Heart right ventricle (tissue), 16 donors: ENCODE measurements at regions of chr22 and their contacts with region 1.

Region 1: DNA sequence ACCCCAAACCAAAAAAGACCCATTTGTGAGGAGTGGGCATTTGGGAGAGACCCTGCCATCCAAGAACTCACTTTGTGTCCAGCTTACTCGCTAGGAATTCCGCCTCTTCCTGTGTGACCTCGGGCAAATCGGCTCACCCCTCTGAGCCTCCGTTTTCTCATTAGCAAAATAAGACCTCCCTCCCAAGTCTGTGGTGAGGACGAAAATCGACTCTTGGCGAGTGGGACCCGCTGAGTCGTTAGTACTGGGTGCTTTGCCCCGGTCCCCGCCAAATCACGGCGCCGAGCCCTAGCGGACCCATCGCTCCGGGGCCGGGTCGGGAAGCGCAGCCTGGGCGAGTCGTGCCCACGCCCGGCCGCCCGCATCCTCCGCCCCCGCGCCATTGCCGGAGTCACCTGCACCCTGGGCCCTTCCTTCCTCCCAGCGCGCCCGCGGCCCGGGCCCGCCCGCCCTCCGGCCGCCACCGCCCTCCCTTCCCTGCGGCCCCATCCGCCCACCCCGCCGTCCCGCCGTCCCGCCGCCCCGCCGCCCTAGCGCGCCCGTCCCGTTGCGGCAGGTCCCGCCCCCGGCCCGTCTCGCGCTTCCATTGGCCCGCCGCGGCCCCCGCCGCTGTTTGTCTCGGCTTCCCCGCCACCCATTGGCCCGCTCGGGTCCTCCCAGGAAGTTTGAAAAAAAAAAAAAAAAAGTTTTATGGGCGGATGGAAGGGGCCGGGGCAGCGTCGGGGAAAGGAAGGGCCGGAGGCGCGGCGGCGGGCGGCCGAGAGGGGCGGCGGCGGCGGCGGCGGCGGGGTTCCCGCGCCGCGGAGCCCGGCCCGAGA is 48.9 kb downstream of the TRIOBP start:
- DNase-seq: peak; percentile 93
- ATAC-seq: peak; percentile 46 to 86 (median 73)
- H3K4me3 ChIP-seq: peak overlapping the region; percentile 70 to 99 (median 96)
- H3K27ac ChIP-seq: peak overlapping the region; percentile 98 to 100 (median 99)
- H3K4me1 ChIP-seq: peaks cover 39 to 80% (median 71%) of the 10 kb centered on the region in 9 donors
- H3K27me3 ChIP-seq: no peaks in the 10 kb centered on the region
- CTCF ChIP-seq: no peak

Region 2: DNA sequence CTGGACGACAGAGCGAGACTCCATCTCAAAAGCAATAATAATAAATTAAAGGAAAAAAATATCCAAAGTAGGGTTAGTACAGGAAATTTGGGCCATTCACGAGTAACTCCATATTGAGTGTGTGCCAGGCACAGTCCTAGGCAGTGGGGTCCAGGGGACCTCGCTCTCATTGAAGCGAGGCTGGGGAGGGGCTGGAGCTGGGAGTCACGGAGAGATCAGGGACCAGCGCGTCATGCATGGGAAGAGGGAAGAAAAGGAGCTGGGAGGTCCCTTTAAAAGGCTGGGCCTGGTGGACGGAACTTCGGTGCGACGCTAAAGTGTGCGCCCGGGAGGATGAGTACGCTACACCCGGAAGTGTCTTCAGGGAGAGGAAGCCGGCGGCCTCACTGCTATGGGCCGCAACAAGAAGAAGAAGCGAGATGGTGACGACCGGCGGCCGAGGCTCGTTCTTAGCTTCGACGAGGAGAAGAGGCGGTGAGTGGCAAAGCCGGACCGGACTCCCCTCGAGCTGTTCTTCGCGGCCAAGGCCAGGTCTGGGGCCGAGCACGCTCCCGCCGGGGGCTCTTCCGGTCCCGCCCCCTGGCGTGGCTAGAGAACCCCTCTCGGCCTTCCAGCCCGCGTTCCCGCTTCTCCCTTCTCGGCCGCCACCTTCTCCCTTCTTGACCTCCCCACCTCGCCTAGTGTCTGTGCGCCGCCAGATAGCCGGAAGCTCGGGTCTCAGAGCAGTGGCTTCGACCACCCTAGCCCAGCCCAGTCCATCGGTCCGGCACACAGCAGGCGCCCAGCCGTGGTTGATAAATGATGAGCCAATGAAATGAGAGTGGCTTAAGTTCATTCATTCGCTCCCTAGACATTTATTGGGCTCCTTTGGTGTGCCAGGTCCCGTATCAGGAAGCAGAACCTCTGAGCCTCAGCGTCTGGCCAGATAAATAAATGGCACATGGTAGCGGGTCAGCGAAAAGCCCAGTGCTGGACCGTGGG is 59.5 kb before region 1 on chr22 and contains the start of gene NOL12:
- intact Hi-C with region 1: loop called in 1 of 10 experiments (anchors 5 kb)
- DNase-seq: peak; percentile 78 to 80
- ATAC-seq: peak; percentile 90 to 96 (median 92)
- H3K4me3 ChIP-seq: peak within 1 kb of the TSS; percentile 64 to 96 (median 85)
- H3K27ac ChIP-seq: peak within 1 kb of the TSS; percentile 69 to 95 (median 90)
- H3K4me1 ChIP-seq: peaks cover 10 to 27% (median 21%) of the 10 kb centered on the region in 9 donors
- H3K27me3 ChIP-seq: no peaks in the 10 kb centered on the region
- CTCF ChIP-seq: peak in 4 of 9 donors; percentile 3 to 24 (median 11)
- total RNA-seq, gene NOL12: 10.8 to 16.8 (median 12.7) TPM

Region 3: DNA sequence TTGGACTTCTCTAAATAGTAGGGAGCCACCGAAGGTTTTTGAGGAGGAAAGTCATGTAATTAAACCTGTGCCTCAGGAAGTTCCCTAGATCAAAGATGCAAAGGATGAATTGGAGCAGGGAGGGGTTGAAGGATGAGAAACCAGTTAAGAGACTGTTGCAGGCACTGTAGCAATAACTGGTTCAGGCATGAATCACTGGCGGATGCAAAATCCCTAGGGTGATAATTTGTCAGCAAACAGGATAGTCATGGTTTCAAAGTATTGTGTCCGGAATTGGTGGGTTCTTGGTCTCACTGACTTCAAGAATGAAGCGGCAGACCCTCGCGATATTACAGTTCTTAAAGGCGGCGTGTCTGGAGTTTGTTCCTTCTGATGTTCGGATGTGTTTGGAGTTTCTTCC is 29.0 kb before region 1 on chr22:
- intact Hi-C with region 1: no loop called
- DNase-seq: no peak
- ATAC-seq: no peak
- H3K4me3 ChIP-seq: no peak overlapping the region
- H3K27ac ChIP-seq: no peak overlapping the region
- H3K4me1 ChIP-seq: no peaks in the 10 kb centered on the region
- H3K27me3 ChIP-seq: no peaks in the 10 kb centered on the region
- CTCF ChIP-seq: no peak